IMR-90 (cell line): ENCODE measurements at regions of chr12 and their contacts with region 1.

Region 1: GRCh38 chr12:27940756-27941402 is 31.7 kb downstream of the PTHLH start:
- DNase-seq: peak; percentile 82
- ATAC-seq: peak; percentile 79
- H3K4me3 ChIP-seq: no peak overlapping the region
- H3K27ac ChIP-seq: no peak overlapping the region
- H3K4me1 ChIP-seq: no peaks in the 10 kb centered on the region
- H3K27me3 ChIP-seq: no peaks in the 10 kb centered on the region
- CTCF ChIP-seq: peak; percentile 84
- POLR2A ChIP-seq: no peak
- RAD21 ChIP-seq: peak; percentile 92

Region 2: DNA sequence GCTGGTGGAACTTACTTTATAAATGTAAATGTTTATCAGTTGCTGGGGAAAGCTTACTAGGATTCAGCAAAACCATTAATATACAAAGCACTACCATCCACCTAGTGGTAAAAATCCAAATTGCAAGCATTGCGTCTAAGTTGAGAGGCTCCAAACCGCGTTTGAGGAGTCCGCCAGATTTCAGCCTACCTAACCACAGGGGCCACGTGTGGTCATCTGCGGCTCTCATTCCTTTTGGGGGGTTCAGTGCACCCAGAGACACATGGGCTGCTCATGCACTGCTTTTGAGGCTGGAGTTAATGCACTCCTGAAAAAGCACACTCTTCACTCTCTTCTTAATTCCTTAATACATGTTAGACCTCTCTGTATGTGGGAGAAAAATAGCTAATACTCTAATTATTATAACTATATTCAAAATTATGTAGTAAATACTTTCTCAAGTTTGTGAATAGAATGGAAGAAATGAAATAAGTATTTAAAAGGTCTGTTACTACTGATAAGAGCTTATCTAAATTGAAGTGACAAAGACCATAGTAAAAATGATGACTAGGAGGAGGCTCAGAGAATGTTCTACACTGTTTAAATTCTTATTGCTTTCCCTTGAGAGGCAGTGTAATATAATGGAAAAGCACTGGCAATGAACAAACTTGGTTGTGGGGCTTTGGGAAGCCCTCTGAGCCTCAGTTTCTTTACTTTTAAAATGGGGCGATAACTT is 119.5 kb before region 1 on chr12:
- CTCF ChIA-PET with region 1: interaction called, 5 read pairs
- POLR2A ChIA-PET with region 1: no interaction called
- dilution Hi-C with region 1: no loop called
- in situ Hi-C with region 1: no loop called
- intact Hi-C with region 1: loop called (anchors 2 kb)
- DNase-seq: peak; percentile 85
- ATAC-seq: peak; percentile 79
- H3K4me3 ChIP-seq: no peak overlapping the region
- H3K27ac ChIP-seq: no peak overlapping the region
- H3K4me1 ChIP-seq: peaks cover 9% of the 10 kb centered on the region
- H3K27me3 ChIP-seq: no peaks in the 10 kb centered on the region
- CTCF ChIP-seq: peak; percentile 73
- POLR2A ChIP-seq: no peak
- RAD21 ChIP-seq: peak; percentile 59

Region 3: DNA sequence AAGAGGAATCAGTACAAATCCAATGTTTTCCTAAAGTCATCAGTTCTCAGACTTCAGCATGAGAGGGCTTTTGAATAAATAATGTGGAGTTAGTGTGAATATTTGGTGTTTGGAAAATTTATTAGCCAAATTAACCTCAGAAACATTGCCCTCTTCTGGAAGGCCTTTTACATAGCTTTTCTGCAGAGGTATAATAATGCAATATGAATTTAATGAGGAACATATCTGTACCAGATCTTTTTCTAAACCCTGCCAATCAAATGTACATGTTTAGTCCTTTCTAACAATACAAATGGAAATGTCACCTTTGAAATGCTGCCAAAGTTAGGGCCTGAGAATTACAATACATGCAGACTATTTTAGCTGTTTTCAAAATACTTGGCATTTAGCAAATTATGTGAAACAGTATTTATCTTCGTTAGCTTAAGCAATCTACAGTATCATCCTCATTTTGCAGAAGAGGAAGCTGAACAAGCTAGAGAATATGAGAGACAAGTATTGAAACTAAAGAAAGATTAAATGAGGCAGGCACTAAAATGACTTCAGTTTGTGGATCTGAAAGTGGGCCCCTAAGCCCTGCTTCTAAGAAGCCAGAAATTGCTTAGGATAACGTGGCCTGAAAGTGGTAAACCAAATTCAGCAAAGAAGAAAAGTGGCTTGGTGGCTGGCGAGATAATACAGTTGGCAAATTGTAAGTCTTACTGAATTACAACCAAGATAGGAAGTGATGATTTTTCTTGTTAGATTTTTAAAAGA is 100.5 kb before region 1 on chr12:
- CTCF ChIA-PET with region 1: interaction called, 3 read pairs
- POLR2A ChIA-PET with region 1: no interaction called
- dilution Hi-C with region 1: no loop called
- in situ Hi-C with region 1: no loop called
- intact Hi-C with region 1: loop called (anchors 5 kb)
- DNase-seq: no peak
- ATAC-seq: 0 out of 2 replicates have a peak, but pooled peaks have one; percentile 30
- H3K4me3 ChIP-seq: no peak overlapping the region
- H3K27ac ChIP-seq: no peak overlapping the region
- H3K4me1 ChIP-seq: peaks cover 6% of the 10 kb centered on the region; the same call in 1 of the 2 replicates
- H3K27me3 ChIP-seq: no peaks in the 10 kb centered on the region
- CTCF ChIP-seq: peak; percentile 58
- POLR2A ChIP-seq: no peak
- RAD21 ChIP-seq: peak; percentile 33; the same call in 1 of the 2 replicates